ENCODE measurements at regions of chr20 and their contacts with region 1.

Region 1: GRCh38 chr20:4082406-4083097 is 67.2 kb upstream of the RNF24 start:
- DNase-seq: peak; percentile 93 to 98 (median 98)
- H3K4me3 ChIP-seq: peak overlapping the region in 5 of 7 experiments; percentile 34 to 73 (median 47)
- H3K27ac ChIP-seq: peak overlapping the region; percentile 81 to 93
- H3K4me1 ChIP-seq: peaks cover 25 to 64% (median 46%) of the 10 kb centered on the region in 4 experiments
- H3K27me3 ChIP-seq: no peaks in the 10 kb centered on the region

Region 2: GRCh38 chr20:4020256-4020655 is 62.3 kb before region 1 on chr20:
- CTCF ChIA-PET with region 1: interaction called, 12 read pairs
- POLR2A ChIA-PET with region 1: no interaction called
- DNase-seq: no peak
- H3K4me3 ChIP-seq: no peak overlapping the region
- H3K27ac ChIP-seq: no peak overlapping the region
- H3K4me1 ChIP-seq: peaks cover 10 to 36% (median 21%) of the 10 kb centered on the region in 4 experiments
- H3K27me3 ChIP-seq: no peaks in the 10 kb centered on the region